OCI-LY7 (cell line): ENCODE measurements at regions of chr14 and their contacts with region 1.

Region 1: DNA sequence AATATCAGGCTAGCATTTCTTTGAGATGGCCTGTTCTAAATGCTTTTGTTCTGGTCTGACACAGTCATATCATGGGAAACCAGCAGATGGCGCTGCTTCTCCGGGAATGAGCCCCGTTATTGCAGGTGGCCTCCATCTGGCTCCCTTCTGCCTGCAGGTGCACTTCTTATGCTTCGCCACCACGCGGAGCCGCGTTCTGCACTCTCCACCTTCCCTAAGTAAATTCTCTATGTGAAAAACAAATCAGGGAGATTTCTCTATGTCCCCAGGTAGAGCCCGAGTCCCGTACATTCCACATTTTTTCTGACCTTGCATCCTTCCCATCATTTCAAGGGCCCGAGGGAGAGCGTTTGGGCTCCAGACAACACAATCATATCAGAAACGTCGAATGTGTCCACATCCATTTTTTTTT is 26.2 kb downstream of the GLRX5 start:
- DNase-seq: peak; percentile 92
- H3K4me3 ChIP-seq: no peak overlapping the region
- H3K27ac ChIP-seq: no peak overlapping the region
- H3K4me1 ChIP-seq: peaks cover 6% of the 10 kb centered on the region
- CTCF ChIP-seq: peak; percentile 100

Region 2: DNA sequence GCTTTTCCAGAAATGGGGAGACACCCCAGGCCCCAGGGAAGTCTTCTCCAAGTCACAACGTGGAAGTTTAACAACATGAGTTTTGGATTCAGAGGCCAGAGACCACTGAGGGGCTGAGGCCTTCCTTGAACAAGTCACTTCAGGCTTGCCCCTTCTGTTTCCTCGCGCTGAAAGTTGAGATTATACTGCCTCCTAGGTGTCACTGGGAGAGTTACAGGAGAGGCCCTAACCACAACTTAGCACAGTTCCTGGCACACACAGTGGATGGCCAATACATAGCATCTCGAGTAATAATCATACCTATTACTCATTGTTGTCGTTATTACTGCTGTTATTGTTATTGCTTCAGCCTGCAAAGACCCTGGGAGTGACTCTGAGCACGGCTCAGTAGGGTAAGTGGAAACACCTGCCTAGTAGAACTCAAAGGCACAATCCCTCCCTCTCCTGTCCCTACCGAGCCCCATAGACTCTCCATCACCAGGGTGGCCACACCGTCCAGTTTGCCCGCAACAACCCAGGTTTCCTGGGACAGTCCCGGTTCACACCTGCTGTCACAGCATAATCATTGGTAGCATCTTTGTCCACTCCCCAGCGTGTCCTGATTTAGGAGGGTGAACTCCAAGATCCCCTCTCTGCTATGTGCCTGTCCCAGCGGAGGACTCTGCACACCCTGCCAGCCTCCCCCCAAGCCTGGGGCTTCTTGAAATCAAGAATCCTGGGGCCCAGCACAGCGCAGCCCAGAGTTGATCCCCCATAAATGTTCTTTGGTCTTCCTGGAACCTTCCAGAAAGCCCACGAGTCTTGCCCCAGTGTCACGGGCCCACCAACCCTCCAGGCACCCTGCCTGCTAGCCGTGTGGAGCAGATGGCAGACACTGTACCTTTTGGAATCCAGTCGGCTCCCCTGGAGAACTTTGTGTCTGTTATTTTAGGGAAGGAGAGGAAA is 129.5 kb before region 1 on chr14:
- CTCF ChIA-PET with region 1: no interaction called
- POLR2A ChIA-PET with region 1: interaction called, 3 read pairs
- intact Hi-C with region 1: loop called (anchors 1 kb)
- DNase-seq: peak; percentile 65
- H3K4me3 ChIP-seq: no peak overlapping the region
- H3K27ac ChIP-seq: no peak overlapping the region
- H3K4me1 ChIP-seq: peaks cover 3% of the 10 kb centered on the region
- CTCF ChIP-seq: peak; percentile 82

Region 3: GRCh38 chr14:95515596-95516552 is 45.1 kb before region 1 on chr14:
- CTCF ChIA-PET with region 1: no interaction called
- POLR2A ChIA-PET with region 1: no interaction called
- intact Hi-C with region 1: no loop called
- DNase-seq: peak; percentile 88
- H3K4me3 ChIP-seq: peak overlapping the region; percentile 64
- H3K27ac ChIP-seq: no peak overlapping the region
- H3K4me1 ChIP-seq: peaks cover 57% of the 10 kb centered on the region
- CTCF ChIP-seq: peak; percentile 71

Region 4: GRCh38 chr14:95609387-95609990 is 48.5 kb after region 1 on chr14:
- CTCF ChIA-PET with region 1: no interaction called
- POLR2A ChIA-PET with region 1: no interaction called
- intact Hi-C with region 1: loop called (anchors 1 kb)
- DNase-seq: peak; percentile 81
- H3K4me3 ChIP-seq: no peak overlapping the region
- H3K27ac ChIP-seq: no peak overlapping the region
- H3K4me1 ChIP-seq: peaks cover 26% of the 10 kb centered on the region
- CTCF ChIP-seq: peak; percentile 97

Region 5: DNA sequence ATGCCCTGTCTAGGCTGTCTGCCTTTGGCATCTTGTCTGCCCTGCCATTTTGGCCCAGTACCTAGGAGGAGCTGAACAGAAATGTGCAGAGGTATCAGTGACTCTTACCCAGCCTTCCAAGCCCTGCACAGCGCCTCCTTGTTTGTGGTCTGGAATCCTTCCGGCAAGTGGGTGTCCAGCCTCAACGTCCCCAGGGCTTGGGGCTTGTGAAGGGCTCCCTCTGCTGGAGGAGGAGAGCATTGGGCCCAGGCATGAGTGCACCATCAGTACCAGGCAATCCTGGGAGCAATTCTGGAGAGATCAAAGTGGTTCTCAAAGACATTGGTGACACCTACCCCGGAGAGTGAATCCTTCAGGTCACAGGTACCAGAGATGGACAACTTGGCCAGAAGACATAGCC is 122.8 kb after region 1 on chr14:
- CTCF ChIA-PET with region 1: no interaction called
- POLR2A ChIA-PET with region 1: interaction called, 3 read pairs
- intact Hi-C with region 1: loop called (anchors 1 kb)
- DNase-seq: peak; percentile 69
- H3K4me3 ChIP-seq: no peak overlapping the region
- H3K27ac ChIP-seq: no peak overlapping the region
- H3K4me1 ChIP-seq: peaks cover 72% of the 10 kb centered on the region
- CTCF ChIP-seq: peak; percentile 98

Region 6: GRCh38 chr14:95774265-95775160 is 213.5 kb after region 1 on chr14:
- CTCF ChIA-PET with region 1: interaction called, 3 read pairs
- POLR2A ChIA-PET with region 1: no interaction called
- intact Hi-C with region 1: loop called (anchors 1 kb)
- DNase-seq: peak; percentile 86
- H3K4me3 ChIP-seq: no peak overlapping the region
- H3K27ac ChIP-seq: no peak overlapping the region
- H3K4me1 ChIP-seq: peaks cover 6% of the 10 kb centered on the region
- CTCF ChIP-seq: peak; percentile 98

Region 7: DNA sequence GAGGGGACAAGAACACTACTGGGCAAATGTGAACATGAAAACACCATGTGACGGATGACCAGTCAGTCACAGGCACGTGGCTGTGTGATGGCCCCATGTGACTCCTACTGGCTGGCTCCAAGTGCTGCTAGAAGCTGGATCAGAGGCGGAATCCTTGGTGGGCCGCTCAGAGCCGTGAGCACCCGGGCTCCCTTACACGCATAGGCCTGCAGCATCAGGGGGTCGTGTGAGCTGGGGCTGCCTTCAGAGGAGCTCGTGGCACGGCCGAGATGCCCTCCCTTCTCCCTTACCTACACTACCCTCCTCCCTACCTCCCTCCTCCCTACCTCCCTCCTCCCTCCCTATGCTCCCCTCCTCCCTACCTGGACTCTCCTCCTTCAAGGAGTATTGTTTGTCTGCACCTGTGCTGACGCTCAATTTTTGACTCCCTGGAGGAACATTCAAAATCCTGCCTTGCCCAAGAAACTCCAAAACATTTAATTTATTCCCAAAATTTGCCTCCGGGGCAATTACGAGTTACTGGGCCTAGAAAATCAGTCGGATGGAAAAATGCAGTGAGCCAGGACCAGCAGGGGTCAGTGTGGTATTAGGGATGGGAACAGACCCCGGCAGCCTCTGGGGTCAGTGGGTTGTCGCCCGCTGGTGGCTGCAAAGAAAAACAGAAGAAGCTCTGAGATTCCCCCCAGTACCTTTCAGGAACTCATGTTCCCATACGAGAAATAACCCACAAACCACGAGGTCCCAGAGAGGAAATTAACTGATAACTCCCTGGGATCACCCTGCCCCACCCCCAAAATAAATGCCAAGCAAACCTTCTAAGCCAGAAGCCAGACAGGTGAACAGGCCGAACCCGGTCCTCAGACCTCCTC is 539.4 kb after region 1 on chr14:
- CTCF ChIA-PET with region 1: interaction called, 3 read pairs
- POLR2A ChIA-PET with region 1: no interaction called
- intact Hi-C with region 1: loop called (anchors 10 kb)
- DNase-seq: peak; percentile 62
- H3K4me3 ChIP-seq: no peak overlapping the region
- H3K27ac ChIP-seq: no peak overlapping the region
- H3K4me1 ChIP-seq: no peaks in the 10 kb centered on the region
- CTCF ChIP-seq: peak; percentile 96

Region 8: DNA sequence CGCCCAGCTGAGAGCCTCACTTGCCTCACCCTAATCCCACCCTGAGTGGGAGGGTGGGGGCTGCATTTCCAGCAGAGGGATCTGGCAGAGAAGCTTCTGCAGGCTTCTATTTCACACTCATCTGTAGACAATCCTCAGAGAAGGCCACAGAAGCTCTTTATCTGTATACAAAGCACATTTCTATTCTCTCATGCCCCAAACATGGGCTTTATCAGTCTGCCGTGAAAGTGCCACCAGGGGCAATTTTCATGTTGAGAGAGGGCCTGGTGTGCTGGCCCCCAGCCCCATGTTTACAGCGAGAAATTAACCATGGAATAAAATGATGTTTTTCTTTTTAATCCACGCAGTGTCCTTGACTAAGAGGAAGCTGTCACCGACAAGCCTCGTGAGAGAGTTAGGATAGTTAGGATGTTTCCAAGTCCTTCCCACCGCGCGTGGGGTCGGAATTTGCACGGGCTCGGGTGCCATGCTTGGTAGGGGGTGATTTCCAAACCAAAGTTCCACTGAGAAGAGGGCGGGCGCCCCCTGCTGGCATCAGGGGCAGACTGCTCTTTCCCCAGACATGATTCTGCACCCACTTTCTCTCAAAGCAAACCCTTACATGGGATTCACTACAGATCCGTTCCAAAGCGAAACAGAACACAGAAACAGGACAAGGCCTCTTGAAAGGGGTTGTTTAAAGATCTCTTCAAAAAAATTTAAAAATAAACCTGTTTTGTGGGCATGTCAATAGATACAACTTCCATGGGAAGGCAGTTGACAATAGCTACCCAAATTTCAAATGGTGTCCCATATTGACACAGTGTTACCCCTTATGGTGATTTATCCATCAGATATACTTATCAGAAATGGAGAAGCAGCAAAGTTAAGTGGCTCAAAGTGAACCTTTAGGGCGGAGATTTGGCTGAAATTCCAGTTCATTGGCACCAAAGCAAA is 714.4 kb after region 1 on chr14:
- CTCF ChIA-PET with region 1: no interaction called
- POLR2A ChIA-PET with region 1: no interaction called
- intact Hi-C with region 1: loop called (anchors 10 kb)
- DNase-seq: peak; percentile 61
- H3K4me3 ChIP-seq: no peak overlapping the region
- H3K27ac ChIP-seq: no peak overlapping the region
- H3K4me1 ChIP-seq: no peaks in the 10 kb centered on the region
- CTCF ChIP-seq: peak; percentile 95

Region 9: DNA sequence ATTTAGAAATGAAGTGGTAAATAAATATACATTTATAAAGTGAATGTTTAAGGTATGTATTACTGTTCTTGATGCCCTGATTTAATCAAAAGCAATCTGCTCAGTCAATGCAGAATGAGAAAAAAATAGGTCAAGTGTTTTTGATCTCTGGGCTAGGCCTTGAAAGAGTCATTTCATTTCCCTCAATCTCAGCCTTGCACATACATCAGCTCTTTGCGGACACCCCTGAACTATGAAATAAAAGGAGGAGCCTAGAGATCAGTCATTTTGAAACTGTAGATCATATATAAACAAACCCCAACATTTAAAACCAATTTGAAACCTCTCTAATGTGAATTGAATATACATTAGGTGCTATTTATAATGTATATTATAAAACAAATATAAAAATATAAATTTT is 759.6 kb after region 1 on chr14:
- CTCF ChIA-PET with region 1: no interaction called
- POLR2A ChIA-PET with region 1: no interaction called
- intact Hi-C with region 1: no loop called
- DNase-seq: no peak
- H3K4me3 ChIP-seq: no peak overlapping the region
- H3K27ac ChIP-seq: no peak overlapping the region
- H3K4me1 ChIP-seq: no peaks in the 10 kb centered on the region
- CTCF ChIP-seq: no peak